HCT116 (cell line): ENCODE measurements at regions of chr7 and their contacts with region 1.

Region 1: GRCh38 chr7:87886875-87887274 is 10.6 kb downstream of the DBF4 start:
- DNase-seq: peak; percentile 3
- ATAC-seq: no peak
- H3K4me3 ChIP-seq: no peak overlapping the region
- H3K27ac ChIP-seq: no peak overlapping the region
- H3K4me1 ChIP-seq: no peaks in the 10 kb centered on the region
- H3K27me3 ChIP-seq: no peaks in the 10 kb centered on the region
- CTCF ChIP-seq: peak in 2 of 3 experiments; percentile 37 to 53; a peak in 3 of 6 replicates
- POLR2A ChIP-seq: no peak
- RAD21 ChIP-seq: peak; percentile 68

Region 2: DNA sequence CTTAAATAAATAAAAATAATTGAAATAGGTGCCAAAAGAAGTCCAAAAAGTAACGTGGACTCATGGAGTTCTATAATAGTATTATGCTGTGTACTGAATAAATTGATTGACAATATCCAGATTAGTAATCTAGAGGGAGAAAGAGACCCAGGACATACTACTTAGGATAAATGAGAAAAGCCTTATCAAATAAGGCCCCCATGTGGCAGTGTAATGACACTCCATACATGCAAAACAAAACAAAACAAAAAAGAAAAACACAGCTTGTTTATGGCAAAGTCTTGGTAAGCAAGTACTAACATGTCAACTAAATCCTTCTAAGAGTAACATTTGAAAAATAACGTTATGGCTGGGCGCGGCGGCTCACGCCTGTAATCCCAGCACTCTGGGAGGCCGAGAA is 262.2 kb before region 1 on chr7:
- CTCF ChIA-PET with region 1: no interaction called
- POLR2A ChIA-PET with region 1: no interaction called
- RAD21 ChIA-PET with region 1: no interaction called
- intact Hi-C with region 1: loop called (anchors 5 kb)
- DNase-seq: no peak
- ATAC-seq: no peak
- H3K4me3 ChIP-seq: 0 out of 4 replicates have a peak overlapping the region, but pooled peaks of 1 of the 2 experiments have one; percentile 1
- H3K27ac ChIP-seq: no peak overlapping the region
- H3K4me1 ChIP-seq: peaks cover 4 to 11% of the 10 kb centered on the region in 2 experiments; a peak in 3 of 4 replicates
- H3K27me3 ChIP-seq: no peaks in the 10 kb centered on the region
- CTCF ChIP-seq: peak; percentile 42 to 55 (median 48); a peak in 5 of 6 replicates
- POLR2A ChIP-seq: no peak
- RAD21 ChIP-seq: peak; percentile 73